Body of pancreas (tissue), 4 donors: ENCODE measurements at regions of chr3 and their contacts with region 1.

Region 1: DNA sequence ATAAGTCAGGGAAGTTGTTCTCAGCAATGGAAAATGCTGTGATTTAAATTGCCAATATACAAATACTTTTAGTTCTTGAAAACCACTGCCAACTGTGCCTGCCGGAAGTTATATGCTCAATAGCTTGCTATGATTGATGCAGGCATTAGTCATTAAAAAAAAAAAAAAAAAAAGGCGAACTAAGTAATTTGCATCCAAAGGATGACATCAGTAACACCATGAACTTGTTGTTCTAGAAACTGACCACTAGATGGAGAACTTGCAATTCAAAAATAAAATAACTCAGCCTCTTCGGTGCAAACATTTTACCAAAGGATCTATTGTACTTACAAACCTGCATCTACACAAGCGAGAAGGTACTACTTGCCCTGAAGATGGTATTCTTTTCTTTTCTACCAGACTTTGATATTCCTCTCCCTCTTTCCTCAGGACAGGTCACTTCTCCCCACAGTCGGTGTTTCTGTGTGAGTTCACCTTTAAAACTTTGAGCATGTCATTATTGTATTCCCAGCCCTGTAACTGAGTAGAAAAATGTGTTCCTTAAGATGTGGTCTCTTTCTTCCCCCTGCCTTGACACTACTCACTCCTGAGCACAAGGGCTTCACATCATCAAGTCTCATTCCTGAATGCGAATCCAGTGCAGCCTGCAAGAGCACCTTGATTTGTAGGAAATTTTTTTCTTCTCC is 115.0 kb upstream of the VEPH1 start:
- DNase-seq: peak in 3 of 4 donors; percentile 24 to 37 (median 25)
- ATAC-seq: peak; percentile 82
- H3K4me3 ChIP-seq: no peak overlapping the region
- H3K27ac ChIP-seq: no peak overlapping the region
- H3K4me1 ChIP-seq: no peaks in the 10 kb centered on the region
- H3K27me3 ChIP-seq: no peaks in the 10 kb centered on the region
- CTCF ChIP-seq: peak; percentile 36 to 77 (median 71)
- POLR2A ChIP-seq: no peak

Region 2: GRCh38 chr3:157452097-157452496 is 166.1 kb before region 1 on chr3:
- intact Hi-C with region 1: no loop called
- DNase-seq: no peak
- ATAC-seq: no peak
- H3K4me3 ChIP-seq: no peak overlapping the region
- H3K27ac ChIP-seq: no peak overlapping the region
- H3K4me1 ChIP-seq: no peaks in the 10 kb centered on the region
- H3K27me3 ChIP-seq: no peaks in the 10 kb centered on the region
- CTCF ChIP-seq: no peak
- POLR2A ChIP-seq: no peak

Region 3: DNA sequence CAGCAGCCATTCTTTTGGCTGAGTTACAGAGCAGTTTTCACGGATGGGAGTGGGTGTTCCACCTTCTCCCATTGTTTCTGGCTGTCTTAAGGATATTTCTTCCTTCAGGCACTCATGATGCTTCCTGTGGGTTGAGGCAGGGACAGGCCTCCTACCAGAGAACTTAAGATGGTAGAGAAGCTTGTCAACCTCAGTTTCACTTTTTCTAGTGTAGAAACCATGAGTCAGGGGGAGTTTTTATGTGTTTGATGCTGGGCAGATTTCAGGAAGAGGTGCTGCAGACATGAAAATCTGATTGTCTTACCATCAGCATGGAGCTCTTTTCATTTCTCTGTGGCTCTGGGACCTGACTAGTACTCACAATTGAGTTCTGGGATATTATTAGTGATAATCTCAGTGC is 66.3 kb before region 1 on chr3:
- intact Hi-C with region 1: no loop called
- DNase-seq: no peak
- ATAC-seq: no peak
- H3K4me3 ChIP-seq: no peak overlapping the region
- H3K27ac ChIP-seq: no peak overlapping the region
- H3K4me1 ChIP-seq: no peaks in the 10 kb centered on the region
- H3K27me3 ChIP-seq: no peaks in the 10 kb centered on the region
- CTCF ChIP-seq: no peak
- POLR2A ChIP-seq: no peak

Region 4: GRCh38 chr3:158434412-158435038 is 816.3 kb after region 1 on chr3:
- intact Hi-C with region 1: loop called (anchors 10 kb)
- DNase-seq: peak; percentile 61 to 77 (median 69)
- ATAC-seq: peak; percentile 79
- H3K4me3 ChIP-seq: no peak overlapping the region
- H3K27ac ChIP-seq: no peak overlapping the region
- H3K4me1 ChIP-seq: peaks cover 7% of the 10 kb centered on the region
- H3K27me3 ChIP-seq: no peaks in the 10 kb centered on the region
- CTCF ChIP-seq: peak; percentile 56 to 84 (median 76)
- POLR2A ChIP-seq: no peak